ENCODE measurements at regions of chr1 and their contacts with region 1.

Region 1: DNA sequence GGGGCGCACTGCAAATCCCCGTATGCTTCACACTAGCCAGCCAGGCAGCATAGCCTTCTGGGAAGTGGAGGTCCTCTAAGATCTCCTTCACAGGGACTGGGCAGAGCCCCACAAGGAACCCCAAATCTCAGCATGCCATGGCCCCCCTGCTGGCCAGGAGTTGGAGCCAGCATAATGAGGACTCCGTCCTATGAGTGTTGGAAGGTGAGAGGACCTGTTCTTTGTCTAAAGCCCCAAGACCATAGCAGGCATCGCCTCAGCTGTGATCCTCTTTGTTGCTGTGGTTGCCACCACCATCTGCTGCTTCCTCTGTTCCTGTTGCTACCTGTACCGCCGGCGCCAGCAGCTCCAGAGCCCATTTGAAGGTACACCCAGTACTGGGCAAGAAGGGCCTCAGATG is 1.5 kb downstream of the SHISA4 start:
- DNase-seq: no peak
- H3K4me3 ChIP-seq: no peak overlapping the region
- H3K27ac ChIP-seq: no peak overlapping the region
- H3K4me1 ChIP-seq: peaks cover 9% of the 10 kb centered on the region
- H3K27me3 ChIP-seq: no peaks in the 10 kb centered on the region

Region 2: DNA sequence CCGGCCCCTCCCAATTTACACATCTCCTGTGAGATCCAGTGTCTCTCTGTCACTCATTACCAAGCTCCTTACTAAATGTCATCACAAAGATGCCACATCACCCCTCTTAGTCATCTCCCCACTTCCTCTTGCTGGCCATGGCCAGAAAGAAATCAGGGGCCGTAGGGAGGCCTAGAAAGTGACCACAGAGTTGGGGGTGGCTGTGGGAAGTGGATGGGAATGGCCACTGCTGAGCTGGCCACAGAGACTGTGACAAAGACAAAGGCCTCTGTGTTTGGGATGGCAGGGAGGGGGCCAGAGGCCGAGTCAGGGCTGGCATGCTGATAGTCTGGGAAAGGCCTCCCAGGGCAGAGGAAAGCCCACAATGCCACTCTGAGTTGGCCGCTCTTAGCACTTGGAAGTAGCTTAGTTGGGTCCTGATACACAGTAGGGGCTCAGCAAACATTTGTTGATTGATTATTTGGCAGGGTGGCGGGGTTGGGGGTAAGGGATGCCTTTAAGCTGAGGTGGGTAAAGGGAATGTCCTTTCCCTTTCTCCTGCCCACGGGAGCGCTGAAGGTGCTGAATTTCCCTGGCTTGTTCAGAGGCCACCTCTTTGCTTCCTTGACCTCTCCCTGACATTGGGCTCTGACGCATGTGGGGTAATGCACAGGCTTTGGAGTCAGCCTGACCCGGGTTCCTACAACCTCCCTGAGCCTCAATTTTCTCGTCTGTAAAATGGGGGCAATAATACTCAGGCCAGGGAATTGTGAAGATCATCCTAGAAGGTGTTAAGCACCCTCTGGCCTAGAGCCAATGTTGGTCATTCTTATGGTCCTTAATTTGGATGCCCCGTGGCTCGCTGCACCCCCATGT is 338.1 kb before region 1 on chr1:
- in situ Hi-C with region 1: no loop called
- DNase-seq: peak; percentile 94
- H3K4me3 ChIP-seq: no peak overlapping the region
- H3K27ac ChIP-seq: peak overlapping the region; percentile 93
- H3K4me1 ChIP-seq: peaks cover 52% of the 10 kb centered on the region
- H3K27me3 ChIP-seq: no peaks in the 10 kb centered on the region

Region 3: GRCh38 chr1:201982623-201983379 is 92.6 kb after region 1 on chr1 and contains the start of gene RNPEP:
- in situ Hi-C with region 1: loop called (anchors 5 kb)
- DNase-seq: peak; percentile 91
- H3K4me3 ChIP-seq: peak within 1 kb of the TSS; percentile 100
- H3K27ac ChIP-seq: peak within 1 kb of the TSS; percentile 79
- H3K4me1 ChIP-seq: peaks cover 10% of the 10 kb centered on the region; the same call in 1 of the 2 replicates
- H3K27me3 ChIP-seq: no peaks in the 10 kb centered on the region
- total RNA-seq, gene RNPEP: 80.5 and 83.6 TPM in 2 replicates

Region 4: DNA sequence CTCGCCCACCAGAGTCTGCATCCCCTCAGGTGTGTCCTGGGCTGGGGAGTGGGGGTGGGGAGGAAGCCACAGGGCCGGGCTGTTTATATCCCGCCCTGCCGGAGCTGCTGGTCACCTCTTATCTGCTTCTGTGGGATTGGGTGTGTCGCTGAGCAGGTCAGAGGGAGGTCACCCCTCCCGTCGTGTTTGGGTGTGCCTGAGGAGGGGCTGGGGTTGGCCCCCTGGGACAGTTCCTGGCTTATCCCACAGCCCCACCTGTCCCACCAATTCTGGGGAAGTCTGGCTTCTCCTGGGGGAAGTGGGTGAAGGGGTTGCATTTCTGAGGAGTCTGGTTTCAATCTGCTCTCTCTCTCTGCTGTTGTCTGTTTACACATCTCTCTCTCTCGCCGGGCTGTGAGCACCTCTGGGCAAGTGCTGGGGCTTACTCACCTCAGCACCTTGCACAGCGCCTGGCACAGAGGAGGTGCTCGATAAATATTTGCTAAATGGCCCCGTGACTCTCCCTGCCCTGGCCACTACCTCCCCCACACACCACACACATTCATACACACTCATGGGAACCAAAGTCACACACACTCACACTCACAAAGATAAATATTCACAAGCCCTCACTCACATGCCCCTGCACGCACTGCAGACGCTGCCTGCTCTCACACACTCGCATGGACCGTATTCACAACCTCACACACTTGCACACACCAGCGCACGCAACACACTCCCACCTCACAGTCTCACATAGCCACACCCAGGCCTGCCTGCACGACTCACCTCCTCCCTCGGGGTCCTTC is 128.4 kb after region 1 on chr1:
- in situ Hi-C with region 1: no loop called
- DNase-seq: no peak
- H3K4me3 ChIP-seq: no peak overlapping the region
- H3K27ac ChIP-seq: no peak overlapping the region
- H3K4me1 ChIP-seq: no peaks in the 10 kb centered on the region
- H3K27me3 ChIP-seq: no peaks in the 10 kb centered on the region

Measured in GM23248 (cell line).